PC-3 (cell line): ENCODE measurements at regions of chr15 and their contacts with region 1.

Region 1: GRCh38 chr15:59174835-59175831 is 31.5 kb upstream of the LDHAL6B start:
- DNase-seq: peak; percentile 71
- ATAC-seq: peak; percentile 42
- H3K4me3 ChIP-seq: peak overlapping the region; percentile 2; the same call in 1 of the 2 replicates
- H3K27ac ChIP-seq: peak overlapping the region; percentile 84
- H3K4me1 ChIP-seq: peaks cover 47% of the 10 kb centered on the region
- H3K27me3 ChIP-seq: no peaks in the 10 kb centered on the region
- CTCF ChIP-seq: peak; percentile 66

Region 2: GRCh38 chr15:59002418-59002859 is 172.7 kb before region 1 on chr15:
- CTCF ChIA-PET with region 1: no interaction called
- POLR2A ChIA-PET with region 1: no interaction called
- intact Hi-C with region 1: no loop called
- DNase-seq: no peak
- ATAC-seq: no peak
- H3K4me3 ChIP-seq: no peak overlapping the region
- H3K27ac ChIP-seq: no peak overlapping the region
- H3K4me1 ChIP-seq: no peaks in the 10 kb centered on the region
- H3K27me3 ChIP-seq: no peaks in the 10 kb centered on the region
- CTCF ChIP-seq: no peak

Region 3: GRCh38 chr15:59191855-59192237 is 16.7 kb after region 1 on chr15:
- CTCF ChIA-PET with region 1: interaction called, 3 read pairs
- POLR2A ChIA-PET with region 1: no interaction called
- intact Hi-C with region 1: loop called (anchors 2 kb)
- DNase-seq: peak; percentile 96
- ATAC-seq: peak; percentile 99
- H3K4me3 ChIP-seq: peak overlapping the region; percentile 66
- H3K27ac ChIP-seq: peak overlapping the region; percentile 100
- H3K4me1 ChIP-seq: peaks cover 28% of the 10 kb centered on the region
- H3K27me3 ChIP-seq: no peaks in the 10 kb centered on the region
- CTCF ChIP-seq: no peak

Region 4: GRCh38 chr15:59232476-59232875 is 57.3 kb after region 1 on chr15:
- CTCF ChIA-PET with region 1: no interaction called
- POLR2A ChIA-PET with region 1: no interaction called
- intact Hi-C with region 1: no loop called
- DNase-seq: peak; percentile 10
- ATAC-seq: peak; percentile 40; the same call in 1 of the 2 replicates
- H3K4me3 ChIP-seq: no peak overlapping the region
- H3K27ac ChIP-seq: no peak overlapping the region
- H3K4me1 ChIP-seq: no peaks in the 10 kb centered on the region
- H3K27me3 ChIP-seq: no peaks in the 10 kb centered on the region
- CTCF ChIP-seq: no peak

Region 5: GRCh38 chr15:59247364-59247763 is 72.2 kb after region 1 on chr15:
- CTCF ChIA-PET with region 1: no interaction called
- POLR2A ChIA-PET with region 1: interaction called, 14 read pairs
- intact Hi-C with region 1: loop called (anchors 10 kb)
- DNase-seq: peak; percentile 72
- ATAC-seq: peak; percentile 79
- H3K4me3 ChIP-seq: no peak overlapping the region
- H3K27ac ChIP-seq: no peak overlapping the region
- H3K4me1 ChIP-seq: 0 out of 2 replicates have a peak, but pooled peaks cover 11% of the 10 kb centered on the region
- H3K27me3 ChIP-seq: no peaks in the 10 kb centered on the region
- CTCF ChIP-seq: peak; percentile 72

Region 6: GRCh38 chr15:59260090-59260489 is 85.0 kb after region 1 on chr15:
- CTCF ChIA-PET with region 1: no interaction called
- POLR2A ChIA-PET with region 1: no interaction called
- intact Hi-C with region 1: no loop called
- DNase-seq: no peak
- ATAC-seq: no peak
- H3K4me3 ChIP-seq: no peak overlapping the region
- H3K27ac ChIP-seq: no peak overlapping the region
- H3K4me1 ChIP-seq: peaks cover 15% of the 10 kb centered on the region; the same call in 1 of the 2 replicates
- H3K27me3 ChIP-seq: no peaks in the 10 kb centered on the region
- CTCF ChIP-seq: no peak

Region 7: GRCh38 chr15:59276225-59277178 is 101.4 kb after region 1 on chr15:
- CTCF ChIA-PET with region 1: no interaction called
- POLR2A ChIA-PET with region 1: no interaction called
- intact Hi-C with region 1: loop called (anchors 1 kb)
- DNase-seq: peak; percentile 94
- ATAC-seq: peak; percentile 87
- H3K4me3 ChIP-seq: peak overlapping the region; percentile 28; the same call in 1 of the 2 replicates
- H3K27ac ChIP-seq: peak overlapping the region; percentile 97
- H3K4me1 ChIP-seq: peaks cover 81% of the 10 kb centered on the region
- H3K27me3 ChIP-seq: no peaks in the 10 kb centered on the region
- CTCF ChIP-seq: no peak

Region 8: GRCh38 chr15:59299929-59300617 is 124.9 kb after region 1 on chr15:
- CTCF ChIA-PET with region 1: interaction called, 9 read pairs
- POLR2A ChIA-PET with region 1: no interaction called
- intact Hi-C with region 1: loop called (anchors 10 kb)
- DNase-seq: peak; percentile 96
- ATAC-seq: peak; percentile 82
- H3K4me3 ChIP-seq: peak overlapping the region; percentile 41; the same call in 1 of the 2 replicates
- H3K27ac ChIP-seq: peak overlapping the region; percentile 89
- H3K4me1 ChIP-seq: peaks cover 75% of the 10 kb centered on the region
- H3K27me3 ChIP-seq: no peaks in the 10 kb centered on the region
- CTCF ChIP-seq: no peak

Region 9: DNA sequence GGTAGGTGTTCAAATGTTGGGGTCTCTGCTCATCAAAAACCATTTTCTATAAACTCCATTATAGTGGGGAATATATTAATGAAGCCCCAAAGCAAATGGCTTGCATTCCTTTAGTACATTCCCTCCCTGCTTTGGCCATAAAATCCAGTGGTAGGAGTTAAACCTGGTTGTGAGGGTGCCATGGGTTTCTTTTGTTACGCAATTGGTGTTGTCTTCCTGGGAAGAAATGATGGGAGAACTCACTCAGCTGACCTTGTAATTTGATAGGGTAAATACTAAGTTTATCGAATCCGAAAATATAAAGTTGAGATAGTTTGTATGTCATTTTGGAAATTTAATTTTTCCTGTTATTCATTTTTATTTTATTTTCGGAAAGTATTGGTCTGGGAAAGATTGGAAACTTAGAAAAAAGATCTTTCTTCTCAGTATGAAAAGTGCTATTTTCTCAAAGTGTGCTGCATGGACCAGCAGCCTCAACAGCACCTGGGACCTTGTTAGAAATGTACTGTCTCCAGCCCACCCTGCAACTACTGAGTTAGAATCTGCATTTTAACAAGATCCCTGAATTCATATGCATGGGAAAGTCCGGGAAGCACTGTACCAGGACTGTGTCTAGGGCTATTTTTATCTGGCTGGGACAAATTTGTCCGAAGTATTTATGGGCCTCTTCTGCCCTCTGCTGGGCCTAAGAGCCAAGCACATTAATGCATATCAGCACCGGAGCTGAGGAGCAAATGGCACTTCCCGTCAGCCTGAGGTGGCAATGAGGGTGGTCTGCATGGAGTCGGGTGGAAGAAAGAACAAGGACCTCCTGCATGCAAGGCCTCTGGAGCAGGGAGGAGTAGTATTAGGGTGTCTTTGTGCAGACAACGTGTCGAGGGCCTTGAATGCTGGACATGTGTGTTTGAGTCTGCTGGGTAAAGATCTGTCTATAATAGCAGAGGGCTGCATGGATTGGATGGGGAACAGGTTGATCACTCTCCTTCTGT is 317.6 kb after region 1 on chr15:
- CTCF ChIA-PET with region 1: no interaction called
- POLR2A ChIA-PET with region 1: no interaction called
- intact Hi-C with region 1: loop called (anchors 5 kb)
- DNase-seq: peak; percentile 77
- ATAC-seq: peak; percentile 95
- H3K4me3 ChIP-seq: no peak overlapping the region
- H3K27ac ChIP-seq: no peak overlapping the region
- H3K4me1 ChIP-seq: peaks cover 8% of the 10 kb centered on the region; the same call in 1 of the 2 replicates
- H3K27me3 ChIP-seq: no peaks in the 10 kb centered on the region
- CTCF ChIP-seq: peak; percentile 78